PC-9 (cell line): ENCODE measurements at regions of chr5 and their contacts with region 1.

Region 1: GRCh38 chr5:7078901-7079300 is 317.0 kb upstream of the ADCY2 start:
- DNase-seq: no peak
- H3K4me3 ChIP-seq: no peak overlapping the region
- H3K27ac ChIP-seq: no peak overlapping the region
- H3K4me1 ChIP-seq: no peaks in the 10 kb centered on the region
- H3K27me3 ChIP-seq: peaks cover 24% of the 10 kb centered on the region; the same call in 1 of the 2 replicates
- CTCF ChIP-seq: peak; percentile 44; the same call in 1 of the 2 replicates

Region 2: DNA sequence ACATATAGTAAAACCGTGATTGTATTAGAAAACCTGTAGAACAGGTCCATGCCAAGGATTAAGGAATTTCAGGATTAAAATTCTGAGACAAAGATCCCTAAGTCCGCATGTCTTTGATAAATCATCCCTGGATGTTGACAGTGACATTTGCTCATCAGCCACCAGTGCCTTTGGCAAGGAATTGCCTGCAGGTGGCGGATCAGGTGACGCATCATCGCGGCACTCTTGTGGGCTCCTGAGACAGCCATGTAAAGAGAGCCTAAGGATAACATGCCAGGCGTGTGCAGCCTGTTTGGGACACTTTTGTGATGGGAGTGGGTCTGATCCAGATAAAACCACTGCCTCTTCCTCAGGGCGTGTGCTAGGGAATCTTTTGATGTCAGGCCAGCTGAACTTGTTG is 357.6 kb after region 1 on chr5:
- CTCF ChIA-PET with region 1: no interaction called
- POLR2A ChIA-PET with region 1: no interaction called
- intact Hi-C with region 1: loop called (anchors 10 kb)
- DNase-seq: no peak
- H3K4me3 ChIP-seq: no peak overlapping the region
- H3K27ac ChIP-seq: no peak overlapping the region
- H3K4me1 ChIP-seq: no peaks in the 10 kb centered on the region
- H3K27me3 ChIP-seq: peaks cover 14% of the 10 kb centered on the region
- CTCF ChIP-seq: no peak